ENCODE measurements at regions of chr7 and their contacts with region 1.

Region 1: GRCh38 chr7:20172736-20173334 is 44.3 kb downstream of the MACC1 start:
- DNase-seq: no peak
- ATAC-seq: peak; percentile 72
- H3K4me3 ChIP-seq: no peak overlapping the region
- H3K27ac ChIP-seq: no peak overlapping the region
- H3K4me1 ChIP-seq: no peaks in the 10 kb centered on the region
- H3K27me3 ChIP-seq: no peaks in the 10 kb centered on the region
- CTCF ChIP-seq: peak; percentile 47 to 51 (median 49); a peak in 5 of 6 replicates
- EP300 ChIP-seq: no peak
- POLR2A ChIP-seq: no peak
- RAD21 ChIP-seq: peak; percentile 70

Region 2: GRCh38 chr7:20114468-20114867 is 58.4 kb before region 1 on chr7:
- CTCF ChIA-PET with region 1: interaction called, 14 read pairs
- POLR2A ChIA-PET with region 1: no interaction called
- RAD21 ChIA-PET with region 1: interaction called, 5 read pairs
- SMC1A ChIA-PET with region 1: interaction called, 5 read pairs
- in situ Hi-C with region 1: no loop called
- intact Hi-C with region 1: no loop called
- DNase-seq: peak; percentile 62
- ATAC-seq: peak; percentile 91
- H3K4me3 ChIP-seq: no peak overlapping the region
- H3K27ac ChIP-seq: no peak overlapping the region
- H3K4me1 ChIP-seq: peaks cover 21% of the 10 kb centered on the region
- H3K27me3 ChIP-seq: no peaks in the 10 kb centered on the region
- CTCF ChIP-seq: no peak; a peak in 1 of 6 replicates
- EP300 ChIP-seq: no peak
- POLR2A ChIP-seq: no peak
- RAD21 ChIP-seq: 0 out of 2 replicates have a peak, but pooled peaks have one; percentile 11

Region 3: GRCh38 chr7:20158684-20159083 is 14.2 kb before region 1 on chr7:
- CTCF ChIA-PET with region 1: interaction called, 14 read pairs
- POLR2A ChIA-PET with region 1: interaction called, 3 read pairs
- RAD21 ChIA-PET with region 1: interaction called, 4 read pairs
- SMC1A ChIA-PET with region 1: interaction called, 49 read pairs
- in situ Hi-C with region 1: no loop called
- intact Hi-C with region 1: no loop called
- DNase-seq: no peak
- ATAC-seq: peak; percentile 77
- H3K4me3 ChIP-seq: no peak overlapping the region
- H3K27ac ChIP-seq: no peak overlapping the region
- H3K4me1 ChIP-seq: no peaks in the 10 kb centered on the region
- H3K27me3 ChIP-seq: no peaks in the 10 kb centered on the region
- CTCF ChIP-seq: peak; percentile 43 to 54 (median 48); a peak in 5 of 6 replicates
- EP300 ChIP-seq: no peak
- POLR2A ChIP-seq: no peak
- RAD21 ChIP-seq: peak; percentile 73

Region 4: DNA sequence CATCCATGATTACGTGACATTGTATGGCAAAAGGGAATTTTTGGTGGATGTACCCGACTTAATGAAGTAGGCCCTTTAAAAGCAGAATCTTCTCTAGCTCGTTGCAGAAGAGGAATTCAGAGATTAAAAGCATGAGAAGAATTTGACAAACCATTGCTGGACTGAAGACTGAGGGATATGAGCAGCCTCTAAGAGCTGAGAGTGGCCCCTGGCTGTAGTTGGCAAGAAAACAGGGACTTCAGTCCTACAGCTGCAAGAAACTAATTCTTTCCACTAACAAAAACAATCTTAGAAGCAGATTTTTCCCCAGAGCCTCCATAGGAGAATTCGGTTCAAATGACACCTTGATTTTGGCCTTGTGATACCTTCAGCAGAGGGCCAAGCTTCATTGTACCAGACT is 10.3 kb after region 1 on chr7:
- CTCF ChIA-PET with region 1: interaction called, 16 read pairs
- POLR2A ChIA-PET with region 1: interaction called, 3 read pairs
- RAD21 ChIA-PET with region 1: no interaction called
- SMC1A ChIA-PET with region 1: interaction called, 5 read pairs
- in situ Hi-C with region 1: no loop called
- intact Hi-C with region 1: no loop called
- DNase-seq: no peak
- ATAC-seq: peak; percentile 36
- H3K4me3 ChIP-seq: no peak overlapping the region
- H3K27ac ChIP-seq: no peak overlapping the region
- H3K4me1 ChIP-seq: no peaks in the 10 kb centered on the region
- H3K27me3 ChIP-seq: no peaks in the 10 kb centered on the region
- CTCF ChIP-seq: no peak
- EP300 ChIP-seq: no peak
- POLR2A ChIP-seq: no peak
- RAD21 ChIP-seq: no peak

Region 5: DNA sequence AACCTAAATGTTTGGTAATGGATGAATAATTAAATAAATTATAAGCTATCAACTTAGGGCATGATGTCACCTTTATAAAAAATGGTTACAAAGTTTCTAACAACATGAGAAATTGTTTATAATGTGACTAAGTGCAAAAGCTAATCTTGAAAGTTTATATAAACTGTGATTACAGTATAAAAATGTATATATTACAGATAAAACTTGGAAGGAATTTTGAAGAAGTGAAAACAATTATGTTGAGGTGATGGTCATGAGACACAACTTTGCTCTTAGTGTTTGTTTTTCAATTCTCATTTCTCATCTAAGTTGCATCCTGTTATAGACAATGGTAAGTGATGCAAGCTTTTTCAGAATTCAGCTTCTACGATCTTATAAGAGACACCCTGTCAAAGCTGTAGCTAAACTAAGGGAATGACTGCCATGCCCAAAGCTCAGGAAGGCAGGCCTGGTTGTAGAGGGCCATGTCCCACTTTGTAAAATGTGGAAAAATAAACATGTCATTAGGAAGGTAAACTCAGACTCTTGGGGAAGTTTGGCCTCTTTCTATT is 20.5 kb after region 1 on chr7:
- CTCF ChIA-PET with region 1: interaction called, 24 read pairs
- POLR2A ChIA-PET with region 1: interaction called, 3 read pairs
- RAD21 ChIA-PET with region 1: interaction called, 9 read pairs
- SMC1A ChIA-PET with region 1: interaction called, 26 read pairs
- in situ Hi-C with region 1: no loop called
- intact Hi-C with region 1: no loop called
- DNase-seq: no peak
- ATAC-seq: peak; percentile 83
- H3K4me3 ChIP-seq: no peak overlapping the region
- H3K27ac ChIP-seq: peak overlapping the region; percentile 63
- H3K4me1 ChIP-seq: peaks cover 24% of the 10 kb centered on the region
- H3K27me3 ChIP-seq: no peaks in the 10 kb centered on the region
- CTCF ChIP-seq: no peak
- EP300 ChIP-seq: peak; percentile 48 to 58; a peak in 2 of 4 replicates
- POLR2A ChIP-seq: no peak
- RAD21 ChIP-seq: no peak

Region 6: DNA sequence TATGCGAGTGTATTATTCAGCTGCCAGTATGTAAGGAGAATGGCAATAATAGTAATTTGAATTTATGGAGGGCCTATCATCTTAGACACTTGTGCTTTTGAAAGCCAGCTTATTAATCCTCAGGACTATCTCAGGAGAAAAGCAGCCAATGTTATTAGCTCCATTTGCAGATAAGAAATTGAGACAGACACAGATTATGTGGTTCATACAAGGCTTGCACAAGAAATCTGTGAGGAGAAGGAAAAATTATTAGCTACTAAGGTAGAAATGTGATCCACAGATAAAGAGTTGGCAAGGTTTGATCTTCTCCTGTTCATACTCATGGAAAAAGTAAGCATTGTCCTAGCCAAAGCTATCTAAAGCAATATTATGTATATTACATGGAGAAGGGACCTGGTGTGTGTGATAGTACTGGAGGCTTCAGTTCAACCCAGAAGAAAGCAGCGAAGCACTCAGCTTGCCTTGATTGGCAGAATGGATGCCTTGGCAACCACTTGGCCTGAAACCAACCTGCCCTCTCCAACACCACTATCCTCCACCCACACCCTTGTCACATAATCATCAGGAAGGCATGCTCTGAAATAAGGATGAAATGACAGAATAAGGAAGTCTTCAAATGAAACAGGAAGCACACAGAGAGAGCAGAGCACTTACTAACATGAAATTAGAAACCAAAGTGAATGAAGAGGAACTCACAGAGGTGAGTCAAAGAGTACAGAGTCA is 26.3 kb after region 1 on chr7:
- CTCF ChIA-PET with region 1: interaction called, 24 read pairs
- POLR2A ChIA-PET with region 1: interaction called, 4 read pairs
- RAD21 ChIA-PET with region 1: interaction called, 9 read pairs
- SMC1A ChIA-PET with region 1: interaction called, 26 read pairs
- in situ Hi-C with region 1: no loop called
- intact Hi-C with region 1: no loop called
- DNase-seq: peak; percentile 94
- ATAC-seq: peak; percentile 77
- H3K4me3 ChIP-seq: no peak overlapping the region; the same call in 1 of the 2 replicates
- H3K27ac ChIP-seq: peak overlapping the region; percentile 3; the same call in 1 of the 2 replicates
- H3K4me1 ChIP-seq: peaks cover 25% of the 10 kb centered on the region
- H3K27me3 ChIP-seq: no peaks in the 10 kb centered on the region
- CTCF ChIP-seq: no peak
- EP300 ChIP-seq: peak in 1 of 2 experiments; percentile 32; a peak in 1 of 4 replicates
- POLR2A ChIP-seq: no peak
- RAD21 ChIP-seq: no peak

Region 7: GRCh38 chr7:20412032-20412431 is 239.2 kb after region 1 on chr7:
- CTCF ChIA-PET with region 1: no interaction called
- POLR2A ChIA-PET with region 1: no interaction called
- RAD21 ChIA-PET with region 1: no interaction called
- SMC1A ChIA-PET with region 1: no interaction called
- in situ Hi-C with region 1: no loop called
- intact Hi-C with region 1: no loop called
- DNase-seq: no peak
- ATAC-seq: no peak
- H3K4me3 ChIP-seq: no peak overlapping the region
- H3K27ac ChIP-seq: no peak overlapping the region
- H3K4me1 ChIP-seq: no peaks in the 10 kb centered on the region
- H3K27me3 ChIP-seq: no peaks in the 10 kb centered on the region
- CTCF ChIP-seq: no peak
- EP300 ChIP-seq: no peak
- POLR2A ChIP-seq: no peak
- RAD21 ChIP-seq: no peak

Region 8: GRCh38 chr7:20598459-20599309 is 425.8 kb after region 1 on chr7:
- CTCF ChIA-PET with region 1: interaction called, 3 read pairs
- POLR2A ChIA-PET with region 1: no interaction called
- RAD21 ChIA-PET with region 1: no interaction called
- SMC1A ChIA-PET with region 1: no interaction called
- in situ Hi-C with region 1: loop called (anchors 25 kb)
- intact Hi-C with region 1: no loop called
- DNase-seq: peak; percentile 43
- ATAC-seq: peak; percentile 88
- H3K4me3 ChIP-seq: no peak overlapping the region
- H3K27ac ChIP-seq: no peak overlapping the region
- H3K4me1 ChIP-seq: no peaks in the 10 kb centered on the region
- H3K27me3 ChIP-seq: no peaks in the 10 kb centered on the region
- CTCF ChIP-seq: peak; percentile 69 to 91 (median 84)
- EP300 ChIP-seq: no peak
- POLR2A ChIP-seq: no peak
- RAD21 ChIP-seq: peak; percentile 98

Measured in GM12878 (cell line).